ENCODE measurements at regions of chr18 and their contacts with region 1.

Region 1: DNA sequence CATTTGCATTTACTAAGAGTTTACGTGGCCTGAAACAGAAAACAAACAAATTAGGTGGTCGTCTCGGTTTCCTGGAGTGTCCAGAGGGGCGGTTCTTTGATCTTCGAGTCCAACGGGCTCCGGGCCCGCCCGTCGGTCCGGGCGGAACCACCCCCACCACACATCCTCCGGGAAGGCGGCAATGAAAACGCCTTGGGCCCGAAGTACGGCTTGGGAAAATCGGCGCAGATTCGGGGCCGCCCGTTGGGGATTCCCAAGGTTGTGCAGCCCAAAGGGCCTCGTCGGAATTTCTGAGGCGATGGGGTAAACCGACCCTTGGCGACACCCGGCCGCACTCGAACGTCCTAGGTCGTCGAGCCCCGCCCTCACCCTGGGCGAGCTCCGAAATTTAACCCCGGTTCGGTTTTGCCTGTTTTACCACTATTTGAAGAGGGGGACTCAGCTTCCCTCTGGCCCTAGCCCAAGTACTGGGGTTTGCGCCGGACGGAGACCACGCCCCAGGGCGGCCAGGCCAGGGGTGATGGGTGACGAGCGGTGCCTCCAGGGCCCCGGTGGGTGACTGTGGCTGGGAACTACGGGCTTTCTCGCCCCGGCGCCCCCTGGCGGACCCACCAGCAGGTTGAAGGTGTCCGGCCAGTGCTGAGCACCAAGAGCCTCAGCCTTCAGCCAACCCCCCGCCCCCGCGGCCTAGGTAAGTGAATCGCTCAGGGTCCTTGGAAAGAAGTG is 1.9 kb upstream of the CFAP53 start:
- DNase-seq: peak; percentile 93
- ATAC-seq: peak; percentile 76

Region 2: GRCh38 chr18:50281295-50281971 is 13.2 kb after region 1 on chr18 and contains the start of gene MBD1:
- intact Hi-C with region 1: loop called (anchors 1 kb)
- DNase-seq: peak; percentile 99
- ATAC-seq: peak; percentile 97
- total RNA-seq, gene MBD1: 49.4 TPM

Region 3: GRCh38 chr18:50397023-50397422 is 128.8 kb after region 1 on chr18:
- intact Hi-C with region 1: no loop called
- DNase-seq: no peak
- ATAC-seq: no peak

Measured in Right ventricle myocardium inferior (tissue), 1 donor.